ENCODE measurements at regions of chr10 and their contacts with region 1.

Region 1: DNA sequence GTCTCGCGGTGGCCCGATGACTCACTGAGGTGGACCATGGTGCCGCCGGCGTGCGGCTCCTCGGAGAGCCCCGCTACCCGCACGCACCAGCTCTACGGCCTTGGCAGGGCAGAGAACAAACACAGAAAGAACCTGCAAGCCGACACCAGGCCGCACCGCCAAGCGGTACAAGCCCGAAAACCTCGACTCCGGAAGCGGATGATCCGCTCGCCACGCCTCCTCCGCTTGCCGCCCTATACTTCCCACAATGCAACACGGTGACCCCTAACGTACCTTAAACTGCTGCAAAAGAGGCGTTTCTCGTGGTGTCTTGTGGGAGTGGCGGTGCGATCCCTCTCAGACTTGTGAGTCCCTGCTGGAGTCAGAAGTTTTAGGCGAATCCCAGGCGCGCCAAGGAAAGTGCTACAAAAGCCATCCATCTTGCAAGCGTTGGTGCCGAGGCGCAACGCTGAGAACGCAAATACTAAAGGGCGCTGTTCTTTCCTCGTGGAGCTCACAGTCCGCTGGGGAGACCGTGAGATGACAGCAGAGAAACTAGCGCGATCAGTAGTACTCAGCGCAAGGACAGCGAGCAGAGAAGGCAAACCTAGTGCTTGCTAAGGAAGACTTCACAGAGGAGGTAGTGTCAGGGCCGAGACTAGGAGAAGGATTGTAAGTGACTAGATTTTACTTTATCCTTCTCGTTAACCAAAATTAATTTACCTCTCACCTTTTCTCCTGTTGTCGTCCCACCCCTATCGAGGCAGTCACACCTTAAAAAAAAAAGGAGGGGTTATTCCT is at the start of gene MRPS16:
- DNase-seq: peak; percentile 92
- H3K4me3 Mint-ChIP-seq: peak within 1 kb of the TSS; percentile 98
- H3K27ac Mint-ChIP-seq: peak within 1 kb of the TSS; percentile 91
- H3K4me1 Mint-ChIP-seq: peaks cover 29% of the 10 kb centered on the region
- H3K27me3 Mint-ChIP-seq: no peaks in the 10 kb centered on the region
- total RNA-seq, gene MRPS16: 145 and 152 TPM in 2 replicates

Region 2: GRCh38 chr10:73358331-73359279 is 106.0 kb after region 1 on chr10 and contains the start of gene CFAP70:
- intact Hi-C with region 1: loop called (anchors 5 kb)
- DNase-seq: peak; percentile 90
- H3K4me3 Mint-ChIP-seq: peak within 1 kb of the TSS; percentile 89
- H3K27ac Mint-ChIP-seq: peak within 1 kb of the TSS; percentile 77
- H3K4me1 Mint-ChIP-seq: peaks cover 13% of the 10 kb centered on the region
- H3K27me3 Mint-ChIP-seq: peaks cover 8% of the 10 kb centered on the region
- total RNA-seq, gene CFAP70: 0.41 and 0.43 TPM in 2 replicates

Measured in activated T-helper 2 cell treated with anti-CD3 and anti-CD28 coated beads, Interferon-gamma antibody, Interleukin-2, Interleukin-4, amounts not matched to agents 10 μg/mL and 5 μg/mL and 100 μg/mL, durations not matched to agents 14 hours and 24 hours and 36 hours (primary cell).